Transverse colon (tissue), 4 donors: ENCODE measurements at regions of chr5 and their contacts with region 1.

Region 1: GRCh38 chr5:148569948-148570347 is 84.4 kb downstream of the HTR4 start:
- DNase-seq: no peak
- H3K4me3 ChIP-seq: no peak overlapping the region
- H3K27ac ChIP-seq: no peak overlapping the region
- H3K4me1 ChIP-seq: peaks cover 0 to 7% (median 0%) of the 10 kb centered on the region in 4 donors
- H3K27me3 ChIP-seq: no peaks in the 10 kb centered on the region
- CTCF ChIP-seq: no peak
- EP300 ChIP-seq: no peak
- POLR2A ChIP-seq: no peak

Region 2: DNA sequence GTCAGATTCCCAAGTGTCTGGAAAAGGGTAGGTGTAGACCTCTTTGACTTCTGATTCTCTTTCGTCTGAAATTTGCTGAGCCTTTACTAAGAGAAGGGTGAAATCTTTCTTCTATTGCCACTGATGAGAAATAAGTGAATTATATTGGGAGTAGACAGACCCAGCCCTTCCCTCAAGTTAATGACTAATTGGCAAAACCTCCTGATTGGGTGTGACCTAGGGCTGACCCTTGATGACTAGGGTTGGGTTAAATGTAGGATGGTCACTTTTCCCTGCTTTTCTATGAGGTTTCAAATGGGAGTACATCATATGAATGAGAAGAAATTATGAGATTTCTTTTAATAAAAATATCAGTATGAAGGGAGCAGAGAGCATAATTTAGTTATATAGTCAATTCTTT is 590.2 kb before region 1 on chr5:
- in situ Hi-C with region 1: no loop called
- intact Hi-C with region 1: no loop called
- DNase-seq: no peak
- H3K4me3 ChIP-seq: no peak overlapping the region
- H3K27ac ChIP-seq: no peak overlapping the region
- H3K4me1 ChIP-seq: no peaks in the 10 kb centered on the region
- H3K27me3 ChIP-seq: no peaks in the 10 kb centered on the region
- CTCF ChIP-seq: no peak
- EP300 ChIP-seq: no peak
- POLR2A ChIP-seq: no peak

Region 3: GRCh38 chr5:148725677-148726076 is 155.7 kb after region 1 on chr5:
- in situ Hi-C with region 1: no loop called
- intact Hi-C with region 1: loop called (anchors 2 kb)
- DNase-seq: no peak
- H3K4me3 ChIP-seq: no peak overlapping the region
- H3K27ac ChIP-seq: no peak overlapping the region
- H3K4me1 ChIP-seq: peaks cover 0 to 9% (median 1%) of the 10 kb centered on the region in 4 donors
- H3K27me3 ChIP-seq: no peaks in the 10 kb centered on the region
- CTCF ChIP-seq: no peak
- EP300 ChIP-seq: no peak
- POLR2A ChIP-seq: no peak